BJ (cell line): ENCODE measurements at regions of chr12 and their contacts with region 1.

Region 1: GRCh38 chr12:6632026-6632983 is 3.5 kb downstream of the LPAR5 start:
- DNase-seq: no peak
- H3K4me3 ChIP-seq: no peak overlapping the region
- H3K27me3 ChIP-seq: no peaks in the 10 kb centered on the region
- CTCF ChIP-seq: no peak

Region 2: DNA sequence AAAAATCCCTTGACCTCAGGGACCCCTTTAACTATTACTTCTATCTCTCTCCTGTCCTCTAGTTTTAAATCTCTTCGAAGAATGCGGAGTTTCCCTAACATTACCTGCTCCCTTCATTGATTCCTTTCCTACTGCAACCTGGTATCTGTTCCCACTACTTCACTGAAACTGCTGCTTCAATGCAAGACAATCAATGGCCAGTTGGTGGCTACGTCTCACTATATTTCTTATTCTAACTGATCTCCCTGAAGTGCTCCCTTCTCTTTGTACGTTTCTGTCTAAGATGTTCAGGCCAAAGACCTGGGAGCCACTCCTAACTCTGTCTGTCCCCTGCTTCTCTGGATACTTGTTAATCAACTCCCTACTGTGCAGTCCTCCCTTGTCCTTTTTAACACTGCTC is 1732.9 kb before region 1 on chr12:
- CTCF ChIA-PET with region 1: no interaction called
- POLR2A ChIA-PET with region 1: no interaction called
- DNase-seq: no peak
- H3K4me3 ChIP-seq: no peak overlapping the region
- H3K27me3 ChIP-seq: no peaks in the 10 kb centered on the region
- CTCF ChIP-seq: no peak

Region 3: DNA sequence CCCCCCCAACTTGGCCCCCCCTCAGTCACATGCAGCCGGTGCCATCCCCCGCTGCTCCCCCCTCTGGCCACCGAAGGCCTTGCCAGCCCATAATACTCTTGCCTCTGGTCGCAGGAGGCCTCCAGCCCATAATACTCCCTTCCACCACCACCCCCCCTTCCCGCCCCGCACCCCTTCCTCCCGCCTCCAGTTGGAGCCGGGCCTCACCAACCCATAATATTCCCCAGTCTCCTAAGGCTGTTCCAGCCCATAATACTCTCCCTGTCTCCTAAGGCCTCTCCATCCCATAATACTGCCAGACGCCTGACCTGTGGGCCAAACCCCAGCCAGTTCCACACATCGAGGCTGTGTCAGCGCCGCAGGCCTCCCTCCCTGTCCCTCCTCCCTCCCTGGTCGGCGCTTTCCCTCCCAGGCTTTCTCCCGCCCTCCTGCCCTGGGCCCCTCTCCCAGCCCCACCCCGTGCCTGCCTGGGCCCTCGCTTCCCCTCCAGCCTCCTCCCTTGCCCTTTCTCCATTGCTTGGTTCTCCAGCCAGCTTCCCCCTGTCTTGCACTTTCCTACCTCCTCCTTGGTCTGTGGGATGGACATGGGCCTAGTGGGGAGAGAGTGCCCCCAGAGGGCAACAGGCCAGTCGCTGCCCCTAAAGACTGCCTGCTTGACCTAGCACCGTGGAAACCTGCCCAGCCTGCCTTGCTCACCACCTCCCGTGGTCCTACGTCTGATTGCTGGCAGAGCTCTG is 18.4 kb before region 1 on chr12:
- CTCF ChIA-PET with region 1: interaction called, 5 read pairs
- POLR2A ChIA-PET with region 1: interaction called, 11 read pairs
- DNase-seq: peak; percentile 87
- H3K4me3 ChIP-seq: no peak overlapping the region
- H3K27me3 ChIP-seq: no peaks in the 10 kb centered on the region
- CTCF ChIP-seq: peak; percentile 22; the same call in 1 of the 2 replicates